ENCODE measurements at regions of chr16 and their contacts with region 1.

Region 1: GRCh38 chr16:81940781-81941560 is 70.3 kb downstream of the SDR42E1 start:
- DNase-seq: no peak
- ATAC-seq: peak; percentile 73; the same call in 1 of the 2 replicates
- H3K4me3 ChIP-seq: no peak overlapping the region
- H3K27ac ChIP-seq: no peak overlapping the region
- H3K4me1 ChIP-seq: no peaks in the 10 kb centered on the region
- H3K27me3 ChIP-seq: no peaks in the 10 kb centered on the region
- CTCF ChIP-seq: peak; percentile 59

Region 2: DNA sequence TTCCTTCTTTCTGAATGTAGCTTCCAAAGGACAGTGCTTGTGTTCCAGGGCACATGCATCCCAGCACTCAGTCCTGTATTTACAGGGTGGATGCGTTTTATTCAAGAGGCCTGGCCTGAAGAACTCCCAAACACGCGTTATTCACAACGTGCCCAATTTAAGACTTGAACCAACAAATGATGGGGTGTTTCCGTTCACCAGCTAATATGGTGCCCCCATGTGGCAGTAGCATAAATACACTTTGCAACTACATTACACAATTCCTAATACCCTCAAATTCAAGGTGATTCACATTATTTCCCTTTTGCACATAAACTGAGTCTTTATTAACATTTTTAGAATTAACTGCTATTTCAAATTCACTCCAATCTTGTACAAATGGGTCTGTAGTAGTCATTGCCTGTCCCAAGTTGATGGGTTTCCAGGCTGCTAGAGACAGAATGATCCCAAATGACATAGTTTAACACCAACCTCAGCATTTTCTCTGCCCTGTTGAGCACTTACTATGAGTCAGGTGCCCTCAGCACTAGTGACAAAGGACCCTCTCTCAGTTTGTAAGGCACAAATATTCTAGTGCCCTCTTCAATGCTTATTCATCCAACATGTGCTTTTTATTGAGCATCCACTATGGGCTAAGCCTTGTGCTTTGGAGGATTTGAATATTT is 121.0 kb after region 1 on chr16:
- CTCF ChIA-PET with region 1: no interaction called
- POLR2A ChIA-PET with region 1: no interaction called
- in situ Hi-C with region 1: no loop called
- intact Hi-C with region 1: loop called (anchors 10 kb)
- DNase-seq: no peak
- ATAC-seq: no peak
- H3K4me3 ChIP-seq: no peak overlapping the region
- H3K27ac ChIP-seq: no peak overlapping the region
- H3K4me1 ChIP-seq: no peaks in the 10 kb centered on the region
- H3K27me3 ChIP-seq: no peaks in the 10 kb centered on the region
- CTCF ChIP-seq: peak; percentile 72

Region 3: DNA sequence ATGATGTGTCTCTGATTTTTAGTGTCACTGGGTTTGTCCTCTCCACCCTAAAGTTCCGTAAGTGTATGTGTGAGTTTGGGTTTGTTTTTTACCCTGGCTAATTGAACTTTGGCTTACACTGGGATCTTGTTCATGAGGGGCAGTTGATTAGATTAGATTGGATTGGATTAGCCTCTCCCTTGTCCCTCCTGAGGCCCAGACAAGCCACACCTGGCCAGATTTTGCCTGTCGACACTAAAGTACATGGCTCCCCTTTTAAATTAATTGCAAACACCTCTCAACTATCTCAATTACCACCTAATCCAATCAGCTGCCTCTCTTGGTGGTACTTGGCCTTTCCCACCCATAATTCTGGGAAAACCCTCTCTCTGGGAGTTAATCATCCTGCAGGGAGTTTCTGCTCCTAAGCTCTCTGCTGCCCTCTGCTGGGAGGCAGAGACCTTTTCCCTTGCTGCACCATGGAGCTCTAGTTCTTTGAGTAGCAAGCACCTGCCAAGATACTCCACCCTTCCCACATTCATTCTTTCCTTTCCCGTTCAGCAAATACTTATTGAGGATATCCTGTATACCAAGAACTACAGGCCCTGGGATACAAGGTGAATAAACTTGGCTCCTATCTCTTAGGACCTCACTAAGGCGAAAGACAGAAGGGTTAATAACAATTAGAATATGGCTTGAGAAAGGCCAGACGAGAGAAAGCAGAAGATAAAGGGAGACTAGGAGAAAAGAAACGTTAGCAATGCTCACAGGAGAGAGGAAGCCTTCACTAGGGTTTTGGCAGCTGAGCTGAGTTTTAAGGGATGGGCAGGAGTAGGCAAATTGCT is 289.0 kb after region 1 on chr16:
- CTCF ChIA-PET with region 1: no interaction called
- POLR2A ChIA-PET with region 1: no interaction called
- in situ Hi-C with region 1: no loop called
- intact Hi-C with region 1: loop called (anchors 2 kb)
- DNase-seq: peak; percentile 47
- ATAC-seq: peak; percentile 84
- H3K4me3 ChIP-seq: no peak overlapping the region
- H3K27ac ChIP-seq: peak overlapping the region; percentile 59; the same call in 1 of the 2 replicates
- H3K4me1 ChIP-seq: no peaks in the 10 kb centered on the region
- H3K27me3 ChIP-seq: no peaks in the 10 kb centered on the region
- CTCF ChIP-seq: peak; percentile 89

Measured in Panc1 (cell line).